ENCODE measurements at regions of chr11 and their contacts with region 1.

Region 1: DNA sequence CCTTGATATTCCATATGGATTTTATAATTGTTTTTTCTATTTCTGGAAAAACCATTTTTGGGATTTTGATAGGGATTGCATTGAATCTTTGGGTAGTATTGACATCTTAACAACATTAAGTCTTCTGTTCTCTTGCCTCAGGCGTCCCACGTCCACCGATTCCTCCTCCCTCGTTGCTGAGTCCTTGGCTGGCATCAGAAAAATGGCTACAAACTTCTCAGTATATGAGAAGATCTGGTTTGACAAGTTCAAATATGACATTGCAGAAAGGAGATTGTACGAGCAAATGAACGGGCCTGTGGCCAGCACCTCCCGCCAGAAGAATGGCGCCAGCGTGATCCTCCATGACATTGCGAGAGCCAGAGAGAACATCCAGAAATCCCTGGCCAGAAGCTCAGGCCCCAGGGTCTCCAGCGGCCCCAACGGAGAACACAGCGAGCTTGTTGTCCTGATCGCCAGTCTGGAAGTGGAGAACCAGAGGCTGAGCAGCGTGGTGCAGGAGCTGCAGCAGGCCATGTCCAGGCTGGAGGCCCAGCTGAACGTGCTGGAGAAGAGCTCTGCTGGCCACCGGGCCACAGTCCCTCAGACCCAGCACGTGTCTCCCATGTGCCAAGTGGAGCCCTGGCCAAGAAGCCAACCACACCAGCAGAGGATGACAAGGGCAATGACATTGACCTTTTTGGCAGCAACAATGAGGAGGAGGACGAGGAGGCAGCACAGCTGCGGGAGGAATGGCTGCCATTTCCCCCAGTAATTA is 20.7 kb upstream of the SCGB1D1 start:
- DNase-seq: no peak
- H3K4me3 ChIP-seq: no peak overlapping the region
- H3K27ac ChIP-seq: no peak overlapping the region
- H3K4me1 ChIP-seq: no peaks in the 10 kb centered on the region
- H3K27me3 ChIP-seq: no peaks in the 10 kb centered on the region
- CTCF ChIP-seq: no peak
- EP300 ChIP-seq: no peak
- POLR2A ChIP-seq: no peak
- RAD21 ChIP-seq: no peak

Region 2: GRCh38 chr11:62116458-62116857 is 52.8 kb before region 1 on chr11:
- CTCF ChIA-PET with region 1: no interaction called
- POLR2A ChIA-PET with region 1: no interaction called
- DNase-seq: no peak
- H3K4me3 ChIP-seq: no peak overlapping the region
- H3K27ac ChIP-seq: no peak overlapping the region
- H3K4me1 ChIP-seq: no peaks in the 10 kb centered on the region
- H3K27me3 ChIP-seq: no peaks in the 10 kb centered on the region
- CTCF ChIP-seq: no peak
- EP300 ChIP-seq: no peak
- POLR2A ChIP-seq: no peak
- RAD21 ChIP-seq: no peak

Region 3: GRCh38 chr11:62157603-62158002 is 11.7 kb before region 1 on chr11:
- CTCF ChIA-PET with region 1: interaction called, 17 read pairs
- POLR2A ChIA-PET with region 1: interaction called, 6 read pairs
- DNase-seq: no peak
- H3K4me3 ChIP-seq: no peak overlapping the region
- H3K27ac ChIP-seq: no peak overlapping the region
- H3K4me1 ChIP-seq: no peaks in the 10 kb centered on the region
- H3K27me3 ChIP-seq: no peaks in the 10 kb centered on the region
- CTCF ChIP-seq: no peak
- EP300 ChIP-seq: no peak
- POLR2A ChIP-seq: no peak
- RAD21 ChIP-seq: no peak

Region 4: DNA sequence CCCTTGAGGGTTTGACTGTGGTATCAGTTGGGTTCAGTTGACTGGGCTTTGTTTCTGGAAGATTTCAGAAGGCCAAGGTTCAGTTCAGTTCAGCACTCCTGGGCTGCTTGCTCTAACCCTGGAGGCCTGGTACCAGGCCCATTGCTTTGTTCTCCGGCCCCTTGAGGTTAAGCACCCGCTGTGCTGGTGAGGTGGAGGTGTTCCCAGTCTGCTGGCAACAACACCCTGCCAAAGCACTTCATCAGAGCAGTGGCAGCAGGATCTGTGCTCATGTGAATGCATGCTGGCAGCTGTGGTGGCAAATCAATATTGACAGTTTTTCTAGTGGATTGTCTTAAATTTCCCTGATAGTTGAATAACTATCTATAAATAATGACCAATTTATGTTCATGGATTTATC is 16.9 kb after region 1 on chr11:
- CTCF ChIA-PET with region 1: interaction called, 11 read pairs
- POLR2A ChIA-PET with region 1: no interaction called
- DNase-seq: no peak
- H3K4me3 ChIP-seq: no peak overlapping the region
- H3K27ac ChIP-seq: no peak overlapping the region
- H3K4me1 ChIP-seq: no peaks in the 10 kb centered on the region
- H3K27me3 ChIP-seq: no peaks in the 10 kb centered on the region
- CTCF ChIP-seq: no peak
- EP300 ChIP-seq: no peak
- POLR2A ChIP-seq: no peak
- RAD21 ChIP-seq: no peak

Region 5: GRCh38 chr11:62201370-62201769 is 32.1 kb after region 1 on chr11:
- CTCF ChIA-PET with region 1: interaction called, 14 read pairs
- POLR2A ChIA-PET with region 1: no interaction called
- DNase-seq: no peak
- H3K4me3 ChIP-seq: no peak overlapping the region
- H3K27ac ChIP-seq: no peak overlapping the region
- H3K4me1 ChIP-seq: no peaks in the 10 kb centered on the region
- H3K27me3 ChIP-seq: no peaks in the 10 kb centered on the region
- CTCF ChIP-seq: no peak
- EP300 ChIP-seq: no peak
- POLR2A ChIP-seq: no peak
- RAD21 ChIP-seq: no peak

Region 6: DNA sequence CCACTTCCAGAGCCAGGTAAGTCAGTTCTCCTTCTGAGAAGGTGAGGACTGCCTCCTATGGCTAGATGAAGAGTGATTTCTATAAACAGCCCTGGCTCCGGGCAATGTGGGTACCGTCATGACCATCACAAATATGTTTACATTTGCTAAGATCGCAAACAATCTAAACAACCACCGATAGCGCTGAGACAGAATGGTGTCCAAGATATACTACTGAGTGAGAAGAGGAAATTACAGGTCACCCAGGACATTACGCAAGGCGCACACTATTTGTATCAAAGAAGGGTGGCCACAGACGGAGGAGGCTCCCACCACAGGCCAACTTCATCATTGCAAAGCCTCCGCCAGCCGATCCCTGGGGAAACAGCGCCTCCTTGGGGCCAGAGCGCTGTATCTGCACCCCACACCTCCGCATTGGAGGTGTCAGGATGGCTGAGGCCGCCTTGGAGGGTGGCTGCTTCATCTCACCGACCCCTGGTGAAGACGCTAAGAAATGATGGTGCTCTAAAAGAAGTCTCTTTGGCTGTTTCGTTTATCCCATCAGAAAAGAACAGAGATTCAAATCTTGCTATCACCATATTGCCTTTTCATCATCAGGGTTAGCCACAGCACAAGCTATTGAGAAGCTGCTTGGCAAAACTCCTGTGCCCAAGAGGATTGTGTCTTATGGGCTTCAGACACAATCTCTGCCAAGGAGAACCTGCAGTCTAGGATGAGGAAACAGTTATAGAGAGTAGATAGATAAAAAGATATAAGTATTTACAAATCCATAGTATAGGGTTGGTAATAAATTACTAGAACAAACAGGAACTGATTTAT is 155.7 kb after region 1 on chr11:
- CTCF ChIA-PET with region 1: interaction called, 15 read pairs
- POLR2A ChIA-PET with region 1: no interaction called
- DNase-seq: peak; percentile 41 to 91
- H3K4me3 ChIP-seq: no peak overlapping the region
- H3K27ac ChIP-seq: no peak overlapping the region
- H3K4me1 ChIP-seq: no peaks in the 10 kb centered on the region
- H3K27me3 ChIP-seq: 0 out of 7 replicates have a peak, but pooled peaks cover 0 to 2% (median 0%) of the 10 kb centered on the region in 4 experiments
- CTCF ChIP-seq: peak; percentile 98 to 100 (median 99)
- EP300 ChIP-seq: no peak
- POLR2A ChIP-seq: no peak
- RAD21 ChIP-seq: peak; percentile 95 to 98

Measured in H1 (cell line).